ENCODE measurements at regions of chr11 and their contacts with region 1.

Region 1: DNA sequence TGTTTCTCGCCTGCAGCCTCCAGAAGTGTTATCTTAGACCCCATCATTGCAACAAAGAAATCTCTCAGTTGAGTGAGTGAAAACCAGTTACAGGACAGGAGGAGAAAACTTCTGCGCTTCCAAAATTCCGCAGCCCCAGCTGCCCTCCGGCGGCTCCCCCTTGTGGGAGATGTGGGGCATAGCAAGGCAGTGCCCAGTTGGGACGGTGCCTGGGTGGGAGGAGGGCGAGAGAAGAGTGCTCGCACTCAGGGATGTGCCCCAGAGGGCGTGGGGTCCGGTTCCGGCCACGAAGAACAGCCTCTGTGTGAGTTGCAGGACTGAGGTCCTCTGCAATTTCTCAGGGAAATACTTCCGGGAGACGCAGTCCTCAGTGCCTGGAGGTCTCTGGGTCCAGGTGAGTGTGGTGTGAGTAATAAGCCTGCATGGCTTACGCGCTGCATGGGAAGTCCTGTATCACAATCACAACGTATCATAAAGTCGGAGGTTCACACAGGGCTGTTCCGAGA is 87.0 kb upstream of the BLID start:
- DNase-seq: peak; percentile 34 to 91
- H3K4me3 ChIP-seq: peak overlapping the region in 3 of 4 experiments; percentile 13 to 39 (median 21); a peak in 3 of 8 replicates
- H3K27ac ChIP-seq: no peak overlapping the region
- H3K4me1 ChIP-seq: peaks cover 0 to 4% (median under 1%) of the 10 kb centered on the region in 4 experiments; a peak in 2 of 7 replicates
- H3K27me3 ChIP-seq: no peaks in the 10 kb centered on the region
- CTCF ChIP-seq: peak; percentile 93 to 98 (median 94)
- EP300 ChIP-seq: no peak
- POLR2A ChIP-seq: no peak
- RAD21 ChIP-seq: peak; percentile 96 to 98

Region 2: DNA sequence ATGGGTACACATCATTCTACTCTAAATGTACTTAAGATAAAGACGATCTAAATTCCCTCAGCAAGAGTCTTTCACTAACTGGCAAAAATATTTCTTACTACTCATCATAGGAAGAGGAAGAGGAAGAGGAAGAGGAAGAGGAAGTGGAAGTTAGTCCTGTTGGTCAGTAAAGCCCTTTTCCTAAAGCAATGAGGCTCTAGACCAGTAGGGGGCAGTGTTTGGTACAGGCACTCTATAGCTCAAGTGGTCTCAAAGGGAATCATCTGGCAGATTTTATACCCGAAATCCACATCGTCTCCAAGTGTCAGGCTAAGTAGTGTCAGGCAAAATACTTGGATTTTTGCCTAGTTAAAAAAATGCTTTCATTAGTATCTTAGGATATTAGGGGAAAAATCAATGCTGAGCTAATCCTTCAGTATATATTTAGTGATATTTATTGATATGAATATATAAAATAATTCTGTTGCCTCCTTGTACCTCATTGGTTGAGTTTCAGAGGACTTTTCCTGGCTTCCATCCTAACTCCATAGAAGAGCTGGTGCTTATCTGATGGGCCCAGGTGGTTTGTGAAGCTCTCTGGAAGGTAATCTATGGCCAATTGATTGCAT is 94.7 kb before region 1 on chr11:
- CTCF ChIA-PET with region 1: interaction called, 26 read pairs
- POLR2A ChIA-PET with region 1: no interaction called
- DNase-seq: peak in 1 of 2 experiments; percentile 77
- H3K4me3 ChIP-seq: no peak overlapping the region
- H3K27ac ChIP-seq: no peak overlapping the region
- H3K4me1 ChIP-seq: peaks cover 0 to 3% (median under 1%) of the 10 kb centered on the region in 4 experiments; a peak in 2 of 7 replicates
- H3K27me3 ChIP-seq: no peaks in the 10 kb centered on the region
- CTCF ChIP-seq: peak in 2 of 3 experiments; percentile 76 to 89; a peak in 3 of 4 replicates
- EP300 ChIP-seq: no peak
- POLR2A ChIP-seq: no peak
- RAD21 ChIP-seq: peak; percentile 66 to 71

Region 3: DNA sequence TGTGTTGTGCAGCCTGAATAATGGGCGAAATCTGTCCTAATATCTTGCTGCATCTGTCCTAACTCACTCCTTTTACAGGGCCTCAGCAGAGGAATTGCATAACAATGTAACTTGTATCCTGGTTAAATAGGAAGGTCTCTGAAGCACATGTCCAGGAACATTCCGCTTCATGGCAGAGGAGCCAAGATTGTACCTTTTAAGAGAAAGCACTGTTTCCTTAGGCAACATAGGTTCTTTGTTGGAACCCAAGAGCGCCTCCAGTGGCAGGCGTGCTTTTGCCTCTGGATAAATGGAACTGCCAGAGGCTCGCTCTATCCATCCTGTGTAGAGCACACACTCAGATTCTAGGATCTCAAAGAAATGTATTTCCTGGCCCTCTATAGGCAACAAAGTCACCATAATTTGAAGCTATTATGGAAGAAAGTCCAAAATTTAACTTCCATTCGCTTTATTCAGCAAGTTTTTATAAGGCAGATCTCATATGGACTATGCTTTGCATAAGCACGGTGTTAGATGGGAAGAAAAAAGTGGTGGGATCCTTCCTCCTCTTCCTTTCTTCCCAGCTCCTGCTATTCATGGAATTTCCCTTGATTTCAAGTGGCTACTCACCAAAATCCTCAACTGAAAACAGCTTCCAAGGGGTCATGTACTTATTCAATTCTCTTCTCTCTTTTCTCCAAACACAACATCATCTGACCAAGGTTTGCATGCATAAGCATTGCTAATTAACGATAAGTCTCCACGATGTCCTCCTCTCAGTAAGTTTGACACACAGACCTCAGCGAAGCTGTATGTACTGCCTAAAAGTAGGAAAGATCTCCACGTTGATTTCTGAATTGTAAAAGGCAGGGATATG is 87.3 kb before region 1 on chr11 and contains the start of gene BLID:
- CTCF ChIA-PET with region 1: interaction called, 26 read pairs
- POLR2A ChIA-PET with region 1: no interaction called
- DNase-seq: peak in 1 of 2 experiments; percentile 74
- H3K4me3 ChIP-seq: no peak within 1 kb of the TSS
- H3K27ac ChIP-seq: no peak within 1 kb of the TSS
- H3K4me1 ChIP-seq: peaks cover 0 to 3% (median 0%) of the 10 kb centered on the region in 4 experiments; a peak in 1 of 7 replicates
- H3K27me3 ChIP-seq: no peaks in the 10 kb centered on the region; a peak in 1 of 7 replicates
- CTCF ChIP-seq: peak; percentile 60 to 91 (median 75)
- EP300 ChIP-seq: no peak
- POLR2A ChIP-seq: no peak
- RAD21 ChIP-seq: peak; percentile 63 to 64
- total RNA-seq, gene BLID: not detected in 2 replicates

Region 4: DNA sequence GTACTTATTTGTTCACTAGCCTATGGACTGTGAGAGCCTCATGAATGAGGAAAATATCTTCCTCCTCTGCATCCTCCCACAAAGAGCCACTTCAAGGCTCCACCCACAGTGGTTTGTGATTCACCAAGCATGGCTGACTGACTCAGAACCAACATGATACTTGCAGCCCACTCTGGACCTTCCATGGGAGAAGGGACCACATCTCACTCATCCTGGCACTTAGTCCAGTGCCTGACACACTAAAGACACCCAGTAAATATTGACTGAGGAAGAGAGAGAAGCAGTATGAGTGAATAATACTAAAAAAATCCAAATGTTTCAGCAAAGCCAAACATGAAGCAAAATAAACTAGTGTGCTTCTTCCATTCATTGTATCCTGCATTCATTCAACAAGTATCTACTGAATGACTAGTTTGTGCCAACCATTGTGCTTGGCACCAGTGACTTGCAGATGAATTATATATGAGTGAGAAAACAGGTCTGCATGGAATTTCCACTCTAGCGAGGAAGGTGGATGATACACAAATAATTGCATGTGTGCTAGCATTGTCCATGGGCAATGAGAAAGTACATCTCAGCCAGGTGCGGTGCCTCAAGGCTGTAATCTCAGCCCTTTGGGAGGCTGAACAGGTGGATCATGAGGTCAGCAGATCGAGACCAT is 32.1 kb before region 1 on chr11:
- CTCF ChIA-PET with region 1: no interaction called
- POLR2A ChIA-PET with region 1: no interaction called
- DNase-seq: no peak
- H3K4me3 ChIP-seq: no peak overlapping the region
- H3K27ac ChIP-seq: no peak overlapping the region
- H3K4me1 ChIP-seq: peaks cover 0 to 2% (median 0%) of the 10 kb centered on the region in 4 experiments; a peak in 1 of 7 replicates
- H3K27me3 ChIP-seq: no peaks in the 10 kb centered on the region
- CTCF ChIP-seq: no peak
- EP300 ChIP-seq: no peak
- POLR2A ChIP-seq: no peak
- RAD21 ChIP-seq: no peak

Region 5: DNA sequence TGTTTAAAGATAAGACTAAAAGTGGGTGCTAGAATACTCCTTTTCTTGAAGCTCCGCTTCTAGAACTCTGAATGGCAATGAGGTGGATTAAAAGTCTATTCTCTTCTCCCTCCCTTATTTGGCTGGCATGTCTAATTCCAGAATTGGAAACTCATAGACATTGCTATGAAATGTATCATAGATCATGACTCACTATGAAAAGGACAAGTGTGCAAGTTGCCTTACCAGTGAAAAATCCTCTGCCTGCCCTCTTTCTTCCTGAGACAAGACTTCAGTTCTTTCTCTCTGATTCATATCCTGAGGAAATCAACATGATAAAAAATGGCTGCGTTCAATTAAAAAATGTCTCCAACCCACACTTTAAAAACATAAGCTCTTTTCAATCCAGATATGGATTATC is 13.8 kb before region 1 on chr11:
- CTCF ChIA-PET with region 1: interaction called, 17 read pairs
- POLR2A ChIA-PET with region 1: no interaction called
- DNase-seq: no peak
- H3K4me3 ChIP-seq: no peak overlapping the region
- H3K27ac ChIP-seq: no peak overlapping the region
- H3K4me1 ChIP-seq: no peaks in the 10 kb centered on the region
- H3K27me3 ChIP-seq: no peaks in the 10 kb centered on the region
- CTCF ChIP-seq: no peak
- EP300 ChIP-seq: no peak
- POLR2A ChIP-seq: no peak
- RAD21 ChIP-seq: no peak

Region 6: GRCh38 chr11:122215244-122215992 is 12.4 kb after region 1 on chr11:
- CTCF ChIA-PET with region 1: interaction called, 17 read pairs
- POLR2A ChIA-PET with region 1: no interaction called
- DNase-seq: peak; percentile 68 to 89
- H3K4me3 ChIP-seq: no peak overlapping the region
- H3K27ac ChIP-seq: no peak overlapping the region
- H3K4me1 ChIP-seq: peaks cover 0 to 6% (median 3%) of the 10 kb centered on the region in 4 experiments; a peak in 3 of 7 replicates
- H3K27me3 ChIP-seq: no peaks in the 10 kb centered on the region
- CTCF ChIP-seq: peak; percentile 84 to 94 (median 88)
- EP300 ChIP-seq: no peak
- POLR2A ChIP-seq: no peak
- RAD21 ChIP-seq: peak; percentile 86 to 92

Region 7: GRCh38 chr11:122293296-122294023 is 90.5 kb after region 1 on chr11:
- CTCF ChIA-PET with region 1: no interaction called
- POLR2A ChIA-PET with region 1: no interaction called
- DNase-seq: no peak
- H3K4me3 ChIP-seq: no peak overlapping the region
- H3K27ac ChIP-seq: no peak overlapping the region
- H3K4me1 ChIP-seq: no peaks in the 10 kb centered on the region
- H3K27me3 ChIP-seq: no peaks in the 10 kb centered on the region
- CTCF ChIP-seq: peak in 2 of 3 experiments; percentile 39 to 44; a peak in 3 of 4 replicates
- EP300 ChIP-seq: no peak
- POLR2A ChIP-seq: no peak
- RAD21 ChIP-seq: peak; percentile 77 to 84

Measured in H1 (cell line).